ENCODE measurements at regions of chr17 and their contacts with region 1.

Region 1: GRCh38 chr17:5065227-5065744 is 13.0 kb upstream of the ZFP3 start:
- DNase-seq: no peak
- ATAC-seq: no peak
- H3K4me3 ChIP-seq: no peak overlapping the region
- H3K4me3 Mint-ChIP-seq: no peak overlapping the region
- H3K27ac ChIP-seq: no peak overlapping the region
- H3K27ac Mint-ChIP-seq: no peak overlapping the region
- H3K4me1 ChIP-seq: peaks cover 3% of the 10 kb centered on the region
- H3K4me1 Mint-ChIP-seq: no peaks in the 10 kb centered on the region
- H3K27me3 ChIP-seq: no peaks in the 10 kb centered on the region
- H3K27me3 Mint-ChIP-seq: peaks cover 0 to 11% of the 10 kb centered on the region in 2 donors
- CTCF ChIP-seq: no peak

Region 2: GRCh38 chr17:4908301-4908700 is 157.0 kb before region 1 on chr17:
- intact Hi-C with region 1: loop called (anchors 1 kb)
- DNase-seq: peak in 1 of 2 donors; percentile 36
- ATAC-seq: no peak
- H3K4me3 ChIP-seq: no peak overlapping the region
- H3K4me3 Mint-ChIP-seq: no peak overlapping the region
- H3K27ac ChIP-seq: no peak overlapping the region
- H3K27ac Mint-ChIP-seq: no peak overlapping the region
- H3K4me1 ChIP-seq: peaks cover 17% of the 10 kb centered on the region
- H3K4me1 Mint-ChIP-seq: peaks cover 6% of the 10 kb centered on the region in 2 donors
- H3K27me3 ChIP-seq: no peaks in the 10 kb centered on the region
- H3K27me3 Mint-ChIP-seq: no peaks in the 10 kb centered on the region
- CTCF ChIP-seq: no peak

Region 3: DNA sequence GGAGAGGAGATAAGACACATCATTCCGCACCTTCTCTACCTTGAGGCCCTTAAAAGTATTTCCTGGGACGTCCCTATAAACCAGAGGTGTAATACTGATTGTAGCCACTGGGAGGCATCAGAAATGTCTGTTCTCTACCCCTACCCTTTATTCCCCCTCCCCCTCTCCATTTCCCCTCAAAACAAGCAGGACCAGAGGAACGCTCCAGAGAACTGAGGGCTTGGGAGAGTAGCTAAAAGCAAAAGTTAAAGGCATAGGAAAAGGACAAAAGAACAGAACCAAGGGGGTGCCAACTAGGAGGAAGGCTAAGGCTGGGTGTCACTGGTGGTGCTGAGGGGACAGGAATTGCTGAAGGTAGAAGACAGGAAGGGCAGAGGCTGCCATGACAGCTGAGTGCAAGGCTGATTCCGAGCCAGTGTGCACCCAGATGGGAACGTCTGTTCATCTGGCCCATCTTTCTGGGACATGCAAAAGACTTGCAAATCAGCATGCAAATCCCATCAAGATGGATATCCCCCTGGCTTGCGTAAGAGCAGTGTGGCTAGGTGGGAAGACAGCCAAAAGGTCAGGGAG is 84.6 kb before region 1 on chr17:
- intact Hi-C with region 1: loop called (anchors 1 kb)
- DNase-seq: peak in 1 of 2 donors; percentile 85
- ATAC-seq: peak; percentile 70 to 92 (median 83)
- H3K4me3 ChIP-seq: no peak overlapping the region
- H3K4me3 Mint-ChIP-seq: no peak overlapping the region
- H3K27ac ChIP-seq: no peak overlapping the region
- H3K27ac Mint-ChIP-seq: peak overlapping the region; percentile 33 to 50
- H3K4me1 ChIP-seq: peaks cover 26% of the 10 kb centered on the region
- H3K4me1 Mint-ChIP-seq: peaks cover 9 to 19% of the 10 kb centered on the region in 2 donors
- H3K27me3 ChIP-seq: no peaks in the 10 kb centered on the region
- H3K27me3 Mint-ChIP-seq: no peaks in the 10 kb centered on the region
- CTCF ChIP-seq: peak; percentile 80

Region 4: GRCh38 chr17:5031365-5032082 is 33.8 kb before region 1 on chr17:
- intact Hi-C with region 1: loop called (anchors 1 kb)
- DNase-seq: peak; percentile 78 to 93
- ATAC-seq: peak; percentile 91 to 96 (median 92)
- H3K4me3 ChIP-seq: peak overlapping the region; percentile 22
- H3K4me3 Mint-ChIP-seq: peak overlapping the region; percentile 89
- H3K27ac ChIP-seq: peak overlapping the region; percentile 12
- H3K27ac Mint-ChIP-seq: peak overlapping the region; percentile 77 to 83
- H3K4me1 ChIP-seq: peaks cover 14% of the 10 kb centered on the region
- H3K4me1 Mint-ChIP-seq: peaks cover 6 to 13% of the 10 kb centered on the region in 2 donors
- H3K27me3 ChIP-seq: no peaks in the 10 kb centered on the region
- H3K27me3 Mint-ChIP-seq: peaks cover 0 to 7% of the 10 kb centered on the region in 2 donors
- CTCF ChIP-seq: peak; percentile 74

Region 5: DNA sequence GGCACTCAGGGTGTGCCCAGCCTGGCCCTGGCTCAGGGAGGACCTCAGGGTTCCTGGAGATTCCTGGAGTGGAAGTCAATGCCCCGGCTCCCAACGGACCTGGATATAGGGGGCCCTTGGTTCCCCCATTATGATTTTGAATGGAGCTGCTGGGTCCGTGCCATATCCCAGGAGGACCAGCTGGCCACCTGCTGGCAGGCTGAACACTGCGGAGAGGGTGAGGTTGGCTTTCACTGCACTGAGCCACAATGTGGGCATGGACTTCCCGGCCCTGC is 74.1 kb after region 1 on chr17:
- intact Hi-C with region 1: no loop called
- DNase-seq: no peak
- ATAC-seq: no peak
- H3K4me3 ChIP-seq: no peak overlapping the region
- H3K4me3 Mint-ChIP-seq: no peak overlapping the region
- H3K27ac ChIP-seq: no peak overlapping the region
- H3K27ac Mint-ChIP-seq: no peak overlapping the region
- H3K4me1 ChIP-seq: no peaks in the 10 kb centered on the region
- H3K4me1 Mint-ChIP-seq: no peaks in the 10 kb centered on the region
- H3K27me3 ChIP-seq: no peaks in the 10 kb centered on the region
- H3K27me3 Mint-ChIP-seq: peaks cover 0 to 4% of the 10 kb centered on the region in 2 donors
- CTCF ChIP-seq: no peak